ENCODE measurements at regions of chr6 and their contacts with region 1.

Region 1: GRCh38 chr6:11366183-11366933 is 133.9 kb upstream of the NEDD9 start:
- DNase-seq: no peak

Region 2: GRCh38 chr6:11232193-11232769 is 134.1 kb before region 1 on chr6 and contains the start of gene NEDD9:
- intact Hi-C with region 1: loop called (anchors 1 to 5 kb)
- DNase-seq: peak; percentile 99
- total RNA-seq, gene NEDD9: 105 to 166 TPM

Region 3: DNA sequence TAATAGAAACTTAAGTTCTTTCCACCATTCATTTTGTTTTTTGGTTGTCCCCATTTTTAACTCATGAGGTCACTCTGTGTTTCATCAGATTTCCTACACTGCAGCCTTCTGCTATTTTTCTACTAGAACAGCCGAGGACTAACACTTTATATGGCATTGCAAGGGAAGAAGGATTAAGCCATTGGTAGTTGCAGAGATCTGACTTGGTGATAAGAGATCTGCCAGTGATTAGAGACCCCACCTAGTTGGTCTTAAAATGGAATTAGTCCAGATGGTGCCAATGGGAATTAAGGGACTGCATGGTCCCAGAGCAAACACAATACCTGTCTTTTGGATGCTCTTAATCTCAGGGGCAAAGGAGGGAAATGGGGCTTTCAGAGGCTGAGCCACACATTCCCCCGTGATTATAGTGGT is 45.7 kb after region 1 on chr6:
- intact Hi-C with region 1: loop called in 1 of 2 experiments (anchors 2 kb)
- DNase-seq: no peak

Region 4: GRCh38 chr6:11434565-11435326 is 68.4 kb after region 1 on chr6:
- intact Hi-C with region 1: loop called (anchors 5 to 10 kb)
- DNase-seq: no peak

Region 5: DNA sequence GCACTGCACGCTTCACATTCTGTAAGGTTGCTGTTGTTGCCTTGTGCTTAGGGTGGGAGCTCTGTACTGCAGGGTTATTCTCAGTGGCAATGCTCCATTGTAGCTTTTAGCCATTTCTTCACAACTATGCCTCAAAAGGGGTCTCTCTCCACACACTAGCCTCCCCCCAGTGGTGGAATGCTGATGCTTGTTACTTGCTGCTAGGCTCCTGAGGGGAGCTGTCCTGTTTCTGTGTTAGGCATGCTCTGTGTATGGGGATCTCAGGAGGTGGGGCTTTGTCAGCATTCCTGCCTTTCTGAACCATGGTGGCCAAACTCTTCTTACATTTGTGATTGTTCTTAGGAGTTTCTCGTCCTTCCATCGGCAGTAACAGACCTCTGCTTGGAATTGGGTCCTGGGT is 190.0 kb after region 1 on chr6:
- intact Hi-C with region 1: no loop called
- DNase-seq: no peak

Measured in posterior vena cava (tissue), 2 donors.